CD4-positive, alpha-beta T cell (primary cell): ENCODE measurements at regions of chr16 and their contacts with region 1.

Region 1: GRCh38 chr16:57045694-57046381 is 46.5 kb upstream of the CPNE2 start:
- DNase-seq: peak in 10 of 14 experiments; percentile 22 to 60 (median 38)
- ATAC-seq: no peak
- H3K4me3 ChIP-seq: no peak overlapping the region
- H3K4me3 Mint-ChIP-seq: no peak overlapping the region
- H3K27ac ChIP-seq: peak overlapping the region; percentile 32 to 44
- H3K27ac Mint-ChIP-seq: peak overlapping the region; percentile 85
- H3K4me1 ChIP-seq: peaks cover 60% of the 10 kb centered on the region
- H3K4me1 Mint-ChIP-seq: peaks cover 50% of the 10 kb centered on the region
- H3K27me3 ChIP-seq: no peaks in the 10 kb centered on the region
- H3K27me3 Mint-ChIP-seq: no peaks in the 10 kb centered on the region
- CTCF ChIP-seq: peak; percentile 42

Region 2: GRCh38 chr16:56994311-56994710 is 51.5 kb before region 1 on chr16:
- CTCF ChIA-PET with region 1: interaction called, 11 read pairs
- POLR2A ChIA-PET with region 1: interaction called, 81 read pairs
- intact Hi-C with region 1: loop called (anchors 1 to 2 kb)
- DNase-seq: peak in 5 of 14 experiments; percentile 24 to 41 (median 34)
- ATAC-seq: peak; percentile 17
- H3K4me3 ChIP-seq: peak overlapping the region; percentile 24
- H3K4me3 Mint-ChIP-seq: peak overlapping the region; percentile 83
- H3K27ac ChIP-seq: peak overlapping the region; percentile 47 to 67
- H3K27ac Mint-ChIP-seq: peak overlapping the region; percentile 96
- H3K4me1 ChIP-seq: peaks cover 80% of the 10 kb centered on the region
- H3K4me1 Mint-ChIP-seq: peaks cover 91% of the 10 kb centered on the region
- H3K27me3 ChIP-seq: no peaks in the 10 kb centered on the region
- H3K27me3 Mint-ChIP-seq: no peaks in the 10 kb centered on the region
- CTCF ChIP-seq: no peak

Region 3: DNA sequence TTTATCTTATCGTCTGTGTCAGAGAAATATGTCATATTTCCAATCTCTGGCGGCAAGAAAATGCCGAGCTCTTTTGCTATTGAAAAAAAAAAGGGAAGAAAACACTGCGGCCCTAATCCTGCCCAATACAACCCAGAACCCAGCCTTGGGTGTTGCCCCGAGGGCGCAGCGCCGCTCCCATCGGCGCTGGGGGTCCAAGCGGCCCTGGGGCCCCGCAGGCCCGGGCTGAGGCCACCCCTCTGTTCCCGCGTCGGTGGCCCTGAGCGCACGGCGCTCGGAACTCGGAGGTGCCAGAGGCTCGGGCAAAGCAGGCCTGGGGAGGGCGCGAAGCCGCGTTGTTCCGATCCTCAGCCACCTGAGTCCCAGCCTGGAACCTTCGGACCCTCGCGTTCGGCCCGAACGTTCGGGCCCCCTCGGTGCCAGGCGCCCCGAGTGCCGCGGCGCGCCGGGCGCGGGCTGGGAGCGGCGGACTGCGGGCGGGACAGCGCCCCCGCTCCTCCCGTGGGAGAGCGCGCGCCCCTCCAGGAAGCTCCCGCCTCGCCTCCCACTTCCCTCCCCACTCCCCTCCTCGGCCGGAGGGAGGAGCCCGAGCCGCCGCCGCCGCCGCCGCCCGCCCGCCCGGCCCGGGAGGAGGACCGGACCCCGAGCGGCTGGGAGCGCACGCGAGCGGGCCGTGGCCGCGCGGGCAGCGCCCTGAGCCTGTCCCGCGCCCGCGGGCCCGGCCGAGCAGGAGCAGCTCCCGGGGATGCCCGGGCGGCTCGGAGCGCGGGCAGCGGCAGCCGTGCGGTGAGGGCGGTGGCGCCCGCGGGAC is 46.3 kb after region 1 on chr16 and contains the start of gene CPNE2:
- CTCF ChIA-PET with region 1: no interaction called
- POLR2A ChIA-PET with region 1: no interaction called
- intact Hi-C with region 1: no loop called
- DNase-seq: peak in 7 of 14 experiments; percentile 3 to 63 (median 34)
- ATAC-seq: peak; percentile 48
- H3K4me3 ChIP-seq: peak within 1 kb of the TSS; percentile 34
- H3K4me3 Mint-ChIP-seq: peak within 1 kb of the TSS; percentile 87
- H3K27ac ChIP-seq: no peak within 1 kb of the TSS
- H3K27ac Mint-ChIP-seq: no peak within 1 kb of the TSS
- H3K4me1 ChIP-seq: peaks cover 21% of the 10 kb centered on the region
- H3K4me1 Mint-ChIP-seq: peaks cover 11% of the 10 kb centered on the region
- H3K27me3 ChIP-seq: no peaks in the 10 kb centered on the region
- H3K27me3 Mint-ChIP-seq: no peaks in the 10 kb centered on the region
- CTCF ChIP-seq: no peak
- total RNA-seq, gene CPNE2: 2.2 to 3.5 TPM